IMR-90 (cell line): ENCODE measurements at regions of chr1 and their contacts with region 1.

Region 1: GRCh38 chr1:32716312-32717148 is 14.0 kb upstream of the SYNC start:
- DNase-seq: no peak
- ATAC-seq: peak; percentile 64
- H3K4me3 ChIP-seq: no peak overlapping the region
- H3K27ac ChIP-seq: no peak overlapping the region
- H3K4me1 ChIP-seq: peaks cover 4% of the 10 kb centered on the region
- H3K27me3 ChIP-seq: no peaks in the 10 kb centered on the region
- CTCF ChIP-seq: no peak
- POLR2A ChIP-seq: no peak
- RAD21 ChIP-seq: no peak

Region 2: GRCh38 chr1:32386676-32387392 is 329.7 kb before region 1 on chr1:
- CTCF ChIA-PET with region 1: no interaction called
- POLR2A ChIA-PET with region 1: no interaction called
- dilution Hi-C with region 1: no loop called
- in situ Hi-C with region 1: no loop called
- intact Hi-C with region 1: no loop called
- DNase-seq: no peak
- ATAC-seq: no peak
- H3K4me3 ChIP-seq: no peak overlapping the region
- H3K27ac ChIP-seq: no peak overlapping the region
- H3K4me1 ChIP-seq: no peaks in the 10 kb centered on the region
- H3K27me3 ChIP-seq: no peaks in the 10 kb centered on the region
- CTCF ChIP-seq: no peak
- POLR2A ChIP-seq: no peak
- RAD21 ChIP-seq: no peak

Region 3: GRCh38 chr1:32636914-32637645 is 79.5 kb before region 1 on chr1:
- CTCF ChIA-PET with region 1: no interaction called
- POLR2A ChIA-PET with region 1: no interaction called
- dilution Hi-C with region 1: no loop called
- in situ Hi-C with region 1: no loop called
- intact Hi-C with region 1: no loop called
- DNase-seq: no peak
- ATAC-seq: no peak
- H3K4me3 ChIP-seq: no peak overlapping the region
- H3K27ac ChIP-seq: no peak overlapping the region
- H3K4me1 ChIP-seq: no peaks in the 10 kb centered on the region
- H3K27me3 ChIP-seq: no peaks in the 10 kb centered on the region
- CTCF ChIP-seq: no peak
- POLR2A ChIP-seq: no peak
- RAD21 ChIP-seq: no peak

Region 4: DNA sequence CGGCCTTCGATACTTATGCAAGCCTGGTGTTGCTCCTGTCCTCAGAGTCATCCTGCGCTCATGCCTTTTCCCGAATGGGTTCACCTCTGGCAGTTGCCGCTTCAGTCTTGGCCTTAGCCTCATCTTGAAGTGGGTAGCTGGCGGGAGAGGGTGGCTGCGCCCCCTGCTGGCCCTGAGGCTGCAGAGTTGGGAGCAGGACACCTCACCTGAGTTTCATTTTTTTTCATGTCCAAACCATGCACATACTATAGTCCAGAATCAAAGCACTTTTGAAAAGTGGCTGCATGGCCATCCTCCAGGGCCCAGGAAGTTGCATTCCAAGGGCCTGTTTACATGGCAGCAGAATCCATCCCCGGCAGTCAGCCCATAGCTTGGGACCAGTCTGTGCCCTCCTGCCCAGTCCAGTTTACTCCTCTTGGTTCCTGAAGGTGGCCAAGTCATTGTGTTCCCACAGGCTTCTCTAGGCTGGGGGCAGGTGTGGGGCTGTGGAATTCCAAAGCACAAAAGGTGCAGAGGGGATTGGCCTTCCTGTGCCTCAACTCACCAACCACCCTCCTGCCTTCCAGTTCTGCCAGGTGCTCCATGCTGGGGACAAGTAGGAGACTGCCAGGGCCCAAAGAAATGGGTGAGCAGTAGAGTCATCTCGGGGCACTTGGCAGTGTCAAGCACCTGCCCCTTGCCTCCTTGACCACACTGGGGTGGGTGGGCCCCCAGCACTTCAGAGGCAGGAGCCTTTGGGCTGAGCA is 56.7 kb after region 1 on chr1:
- CTCF ChIA-PET with region 1: interaction called, 52 read pairs
- POLR2A ChIA-PET with region 1: no interaction called
- dilution Hi-C with region 1: no loop called
- in situ Hi-C with region 1: loop called (anchors 5 kb)
- intact Hi-C with region 1: loop called (anchors 1 kb)
- DNase-seq: peak; percentile 74
- ATAC-seq: peak; percentile 80
- H3K4me3 ChIP-seq: no peak overlapping the region
- H3K27ac ChIP-seq: no peak overlapping the region
- H3K4me1 ChIP-seq: peaks cover 6% of the 10 kb centered on the region
- H3K27me3 ChIP-seq: no peaks in the 10 kb centered on the region
- CTCF ChIP-seq: peak; percentile 93
- POLR2A ChIP-seq: 0 out of 2 replicates have a peak, but pooled peaks have one; percentile 23
- RAD21 ChIP-seq: peak; percentile 90

Region 5: DNA sequence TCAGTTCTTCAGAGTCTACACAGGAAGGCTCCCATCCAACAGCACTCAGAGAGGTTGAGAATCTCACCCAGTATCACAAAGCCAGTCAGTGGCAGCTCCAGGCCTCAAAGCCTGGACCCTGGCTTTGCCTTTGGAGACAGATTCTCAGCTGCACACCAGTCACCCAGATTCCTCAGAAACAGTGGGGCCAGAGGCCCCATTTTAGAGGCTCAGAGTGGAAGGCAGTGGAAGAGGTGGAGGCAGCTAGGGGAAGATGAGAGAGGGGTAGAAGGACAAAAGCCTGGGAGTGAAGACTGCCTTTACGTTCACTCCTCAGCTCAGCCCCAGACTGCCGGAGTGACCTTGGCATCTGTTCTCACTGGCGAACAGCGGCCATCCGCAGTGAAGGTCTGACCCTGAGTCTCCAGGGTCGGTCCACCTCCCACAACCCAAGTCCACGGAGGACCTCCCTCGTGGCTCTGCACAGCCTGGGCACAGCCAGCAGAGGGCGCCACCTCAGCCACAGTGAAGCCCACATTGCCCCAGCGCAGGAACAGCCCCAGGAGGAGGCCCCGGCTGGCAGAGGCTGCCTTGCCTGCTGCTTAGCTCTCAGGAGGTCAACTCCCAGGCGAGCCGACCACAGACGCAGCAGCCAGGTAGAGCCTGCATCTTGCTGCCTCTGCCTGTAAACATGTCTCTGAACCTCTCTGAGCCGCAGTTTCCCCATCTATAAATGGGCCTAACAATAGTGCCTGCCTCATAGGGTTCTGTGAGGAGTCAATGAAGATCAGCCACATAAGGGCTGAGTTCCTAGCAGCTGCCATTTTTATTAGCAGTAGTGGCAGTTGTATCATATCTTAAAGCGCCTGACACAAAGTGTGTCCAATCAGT is 160.0 kb after region 1 on chr1:
- CTCF ChIA-PET with region 1: interaction called, 4 read pairs
- POLR2A ChIA-PET with region 1: no interaction called
- dilution Hi-C with region 1: no loop called
- in situ Hi-C with region 1: no loop called
- intact Hi-C with region 1: loop called (anchors 1 kb)
- DNase-seq: no peak
- ATAC-seq: peak; percentile 58
- H3K4me3 ChIP-seq: no peak overlapping the region
- H3K27ac ChIP-seq: no peak overlapping the region
- H3K4me1 ChIP-seq: no peaks in the 10 kb centered on the region
- H3K27me3 ChIP-seq: peaks cover 23% of the 10 kb centered on the region
- CTCF ChIP-seq: peak; percentile 58
- POLR2A ChIP-seq: no peak
- RAD21 ChIP-seq: peak; percentile 51